Cardiac septum (tissue), 1 donor: ENCODE measurements at regions of chr4 and their contacts with region 1.

Region 1: GRCh38 chr4:82373816-82374625 is at the start of gene HNRNPD:
- DNase-seq: peak; percentile 97
- total RNA-seq, gene HNRNPD: 110 TPM

Region 2: GRCh38 chr4:82099928-82100579 is 274.0 kb before region 1 on chr4:
- intact Hi-C with region 1: no loop called
- DNase-seq: no peak

Region 3: GRCh38 chr4:82284858-82285805 is 88.9 kb before region 1 on chr4:
- intact Hi-C with region 1: loop called (anchors 5 kb)
- DNase-seq: peak; percentile 100

Region 4: DNA sequence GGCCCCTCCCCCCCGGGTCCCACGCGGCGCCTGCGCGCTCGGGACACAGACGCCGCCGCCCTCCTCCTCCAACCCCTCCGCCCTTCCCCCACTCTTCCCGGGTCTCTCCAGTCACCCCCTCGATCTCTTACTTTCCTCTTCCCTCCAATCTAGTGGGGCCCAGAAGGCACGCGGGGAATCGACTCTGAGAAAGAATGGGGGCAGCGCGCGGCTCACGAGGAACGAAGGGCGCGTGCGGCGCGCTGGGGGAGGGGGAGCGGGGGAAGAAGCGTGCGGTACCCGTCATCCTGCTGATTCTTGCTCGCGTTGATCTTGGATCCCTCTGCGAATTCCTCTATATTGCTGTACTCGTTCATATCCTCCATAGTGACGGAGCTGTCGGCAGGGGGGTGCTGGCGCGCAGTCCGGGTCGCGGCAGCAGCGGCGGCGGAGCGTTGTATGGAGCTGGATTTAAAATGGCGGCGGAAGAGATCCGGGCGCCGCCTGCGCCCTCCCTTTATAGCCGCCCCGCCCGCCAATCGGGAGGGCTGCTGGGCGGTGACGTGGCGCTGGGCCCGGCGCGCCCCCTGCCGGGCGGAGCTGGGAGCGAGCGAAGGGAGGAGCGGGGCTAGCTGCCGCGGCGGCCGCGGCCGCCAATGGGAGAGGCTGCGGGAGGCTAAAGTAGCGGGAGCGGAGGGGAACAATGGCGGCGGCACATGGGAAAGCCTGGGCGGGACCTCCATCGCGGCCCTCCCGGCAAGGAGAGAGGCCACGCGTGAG is 55.1 kb after region 1 on chr4:
- intact Hi-C with region 1: loop called (anchors 1 kb)
- DNase-seq: peak; percentile 97

Region 5: GRCh38 chr4:82447886-82448285 is 73.9 kb after region 1 on chr4:
- intact Hi-C with region 1: no loop called
- DNase-seq: no peak

Region 6: DNA sequence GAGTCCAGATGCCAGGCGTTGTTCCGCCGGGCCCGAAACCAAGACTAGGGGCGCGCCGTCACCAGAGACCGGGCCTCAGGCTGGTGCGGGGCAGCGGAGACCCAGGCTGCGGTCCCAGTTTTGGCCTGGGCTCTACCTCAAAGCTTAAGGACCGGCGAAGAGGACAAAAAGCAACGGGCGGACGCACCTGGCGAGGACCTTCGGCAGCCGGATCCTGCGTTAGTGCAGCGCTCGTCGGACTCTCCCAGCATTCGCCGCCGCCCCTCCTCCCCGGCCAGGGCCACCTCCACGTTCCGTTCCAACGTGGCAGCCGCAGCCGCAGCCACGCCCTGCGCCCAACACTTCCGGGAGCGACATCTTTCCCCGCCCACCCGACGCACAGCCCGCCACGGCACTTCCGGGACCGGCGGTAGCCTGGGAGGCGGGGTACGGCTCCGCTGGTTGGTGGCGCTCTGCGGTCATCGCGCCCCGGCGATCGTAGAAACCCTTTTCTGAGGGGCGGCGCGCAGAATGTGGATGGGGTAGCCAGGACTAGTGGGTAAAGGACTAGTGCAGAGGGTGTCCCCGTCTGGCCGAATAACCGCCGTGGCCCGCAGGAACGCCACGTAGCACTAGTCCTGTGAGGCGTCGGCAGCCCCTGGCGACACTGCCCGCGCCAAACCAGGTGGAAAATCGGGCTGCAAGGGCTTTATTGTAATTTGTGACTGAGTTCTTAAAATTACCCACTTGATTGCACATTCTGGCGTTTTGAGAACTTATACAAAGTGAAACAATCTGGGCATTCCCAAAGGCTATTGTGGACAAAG is 517.1 kb after region 1 on chr4 and contains the start of gene SEC31A:
- intact Hi-C with region 1: loop called (anchors 5 kb)
- DNase-seq: peak; percentile 99
- total RNA-seq, gene SEC31A: 140 TPM

Region 7: GRCh38 chr4:83012687-83013419 is 638.8 kb after region 1 on chr4:
- intact Hi-C with region 1: loop called (anchors 5 kb)
- DNase-seq: peak; percentile 99

Region 8: GRCh38 chr4:83276299-83277040 is 902.4 kb after region 1 on chr4:
- intact Hi-C with region 1: loop called (anchors 5 kb)
- DNase-seq: no peak

Region 9: GRCh38 chr4:83535520-83536361 is 1161.7 kb after region 1 on chr4 and contains the start of gene GPAT3:
- intact Hi-C with region 1: loop called (anchors 5 kb)
- DNase-seq: peak; percentile 95
- total RNA-seq, gene GPAT3: 38.5 TPM